ENCODE measurements at regions of chr21 and their contacts with region 1.

Region 1: GRCh38 chr21:15761507-15762100 is 31.8 kb downstream of the USP25 start:
- DNase-seq: no peak
- H3K4me3 ChIP-seq: no peak overlapping the region
- H3K27ac ChIP-seq: no peak overlapping the region
- H3K4me1 ChIP-seq: no peaks in the 10 kb centered on the region
- H3K27me3 ChIP-seq: no peaks in the 10 kb centered on the region
- CTCF ChIP-seq: no peak

Region 2: DNA sequence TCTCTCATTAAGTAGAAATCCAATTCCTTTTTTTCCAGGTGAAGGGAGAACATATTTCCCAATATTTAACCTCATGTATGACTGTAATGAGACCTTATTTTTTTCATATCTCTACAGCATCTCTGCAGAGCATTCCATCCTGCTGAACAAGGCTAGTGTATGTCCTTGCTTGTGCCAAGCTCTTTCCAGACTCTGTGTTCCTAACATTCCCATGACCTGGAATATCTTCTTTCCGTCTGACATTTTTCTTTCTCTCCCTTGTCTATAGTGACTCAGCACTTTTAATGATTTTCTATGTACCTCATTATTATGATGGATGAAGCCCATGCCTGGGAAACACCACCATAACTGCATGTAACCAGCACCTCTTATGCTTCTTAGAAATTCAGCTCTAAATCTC is 418.5 kb before region 1 on chr21:
- CTCF ChIA-PET with region 1: no interaction called
- POLR2A ChIA-PET with region 1: no interaction called
- intact Hi-C with region 1: no loop called
- DNase-seq: no peak
- H3K4me3 ChIP-seq: no peak overlapping the region
- H3K27ac ChIP-seq: no peak overlapping the region
- H3K4me1 ChIP-seq: no peaks in the 10 kb centered on the region
- H3K27me3 ChIP-seq: no peaks in the 10 kb centered on the region
- CTCF ChIP-seq: no peak

Region 3: DNA sequence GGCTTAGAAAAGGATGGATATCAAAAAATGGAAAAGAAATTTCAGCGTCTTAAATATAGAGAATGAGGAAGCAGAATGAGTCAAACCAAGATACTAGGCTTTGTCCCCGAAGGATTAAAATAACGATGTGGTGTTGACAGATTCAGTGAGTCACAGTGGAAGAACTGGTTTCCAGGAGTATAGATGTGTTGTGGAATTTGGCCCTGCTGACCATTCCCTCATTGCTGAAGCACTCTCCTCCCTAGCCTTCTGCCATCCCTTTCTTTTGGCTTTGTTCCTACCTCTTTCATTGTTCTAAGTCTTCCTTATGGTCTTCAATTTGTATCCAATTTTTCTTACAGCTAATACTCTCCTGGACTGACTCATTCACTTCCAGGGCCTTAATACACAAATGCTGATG is 54.9 kb before region 1 on chr21:
- CTCF ChIA-PET with region 1: no interaction called
- POLR2A ChIA-PET with region 1: no interaction called
- intact Hi-C with region 1: loop called (anchors 10 kb)
- DNase-seq: no peak
- H3K4me3 ChIP-seq: no peak overlapping the region
- H3K27ac ChIP-seq: no peak overlapping the region
- H3K4me1 ChIP-seq: no peaks in the 10 kb centered on the region
- H3K27me3 ChIP-seq: no peaks in the 10 kb centered on the region
- CTCF ChIP-seq: no peak

Region 4: GRCh38 chr21:16102113-16102512 is 340.5 kb after region 1 on chr21:
- CTCF ChIA-PET with region 1: no interaction called
- POLR2A ChIA-PET with region 1: no interaction called
- intact Hi-C with region 1: no loop called
- DNase-seq: no peak
- H3K4me3 ChIP-seq: no peak overlapping the region
- H3K27ac ChIP-seq: no peak overlapping the region
- H3K4me1 ChIP-seq: no peaks in the 10 kb centered on the region
- H3K27me3 ChIP-seq: no peaks in the 10 kb centered on the region
- CTCF ChIP-seq: no peak

Region 5: GRCh38 chr21:16211339-16212303 is 450.0 kb after region 1 on chr21:
- CTCF ChIA-PET with region 1: no interaction called
- POLR2A ChIA-PET with region 1: no interaction called
- intact Hi-C with region 1: no loop called
- DNase-seq: peak; percentile 3
- H3K4me3 ChIP-seq: no peak overlapping the region
- H3K27ac ChIP-seq: no peak overlapping the region
- H3K4me1 ChIP-seq: no peaks in the 10 kb centered on the region
- H3K27me3 ChIP-seq: no peaks in the 10 kb centered on the region
- CTCF ChIP-seq: no peak